ENCODE measurements at regions of chr9 and their contacts with region 1.

Region 1: GRCh38 chr9:135085830-135086546 is 1.5 kb upstream of the OLFM1 start:
- DNase-seq: peak; percentile 30 to 63
- ATAC-seq: peak; percentile 55 to 65
- H3K4me3 ChIP-seq: peak overlapping the region; percentile 19 to 60 (median 40)
- H3K27ac ChIP-seq: peak overlapping the region in 1 of 4 donors; percentile 38
- H3K4me1 ChIP-seq: peaks cover 14 to 28% of the 10 kb centered on the region in 2 donors
- H3K27me3 ChIP-seq: peaks cover 23 to 39% (median 33%) of the 10 kb centered on the region in 3 donors
- CTCF ChIP-seq: peak; percentile 90 to 97 (median 92)
- POLR2A ChIP-seq: no peak

Region 2: GRCh38 chr9:133979273-133979920 is 1106.6 kb before region 1 on chr9:
- in situ Hi-C with region 1: no loop called
- intact Hi-C with region 1: no loop called
- DNase-seq: no peak
- ATAC-seq: peak in 1 of 2 donors; percentile 58
- H3K4me3 ChIP-seq: peak overlapping the region; percentile 25 to 41 (median 32)
- H3K27ac ChIP-seq: peak overlapping the region in 2 of 4 donors; percentile 43 to 47
- H3K4me1 ChIP-seq: peaks cover 0 to 12% of the 10 kb centered on the region in 2 donors
- H3K27me3 ChIP-seq: peaks cover 0 to 13% (median 4%) of the 10 kb centered on the region in 3 donors
- CTCF ChIP-seq: no peak
- POLR2A ChIP-seq: no peak

Region 3: GRCh38 chr9:135137398-135137832 is 51.4 kb after region 1 on chr9:
- in situ Hi-C with region 1: no loop called
- intact Hi-C with region 1: loop called (anchors 5 kb)
- DNase-seq: no peak
- ATAC-seq: peak in 1 of 2 donors; percentile 57
- H3K4me3 ChIP-seq: no peak overlapping the region
- H3K27ac ChIP-seq: peak overlapping the region in 2 of 4 donors; percentile 30 to 33
- H3K4me1 ChIP-seq: peaks cover 14 to 36% of the 10 kb centered on the region in 2 donors
- H3K27me3 ChIP-seq: no peaks in the 10 kb centered on the region
- CTCF ChIP-seq: no peak
- POLR2A ChIP-seq: no peak

Region 4: GRCh38 chr9:135156525-135157510 is 70.8 kb after region 1 on chr9:
- in situ Hi-C with region 1: no loop called
- intact Hi-C with region 1: loop called (anchors 2 kb)
- DNase-seq: no peak
- ATAC-seq: no peak
- H3K4me3 ChIP-seq: no peak overlapping the region
- H3K27ac ChIP-seq: no peak overlapping the region
- H3K4me1 ChIP-seq: no peaks in the 10 kb centered on the region
- H3K27me3 ChIP-seq: peaks cover 16 to 25% (median 17%) of the 10 kb centered on the region in 3 donors
- CTCF ChIP-seq: no peak
- POLR2A ChIP-seq: no peak

Region 5: GRCh38 chr9:135183528-135184180 is 97.7 kb after region 1 on chr9:
- in situ Hi-C with region 1: no loop called
- intact Hi-C with region 1: loop called (anchors 2 kb)
- DNase-seq: no peak
- ATAC-seq: no peak
- H3K4me3 ChIP-seq: no peak overlapping the region
- H3K27ac ChIP-seq: no peak overlapping the region
- H3K4me1 ChIP-seq: no peaks in the 10 kb centered on the region
- H3K27me3 ChIP-seq: peaks cover 24 to 33% (median 29%) of the 10 kb centered on the region in 3 donors
- CTCF ChIP-seq: no peak
- POLR2A ChIP-seq: no peak

Region 6: GRCh38 chr9:135343837-135344522 is 258.0 kb after region 1 on chr9:
- in situ Hi-C with region 1: loop called in 3 of 4 experiments (anchors 5 to 10 kb)
- intact Hi-C with region 1: loop called (anchors 1 kb)
- DNase-seq: peak; percentile 13 to 16
- ATAC-seq: no peak
- H3K4me3 ChIP-seq: no peak overlapping the region
- H3K27ac ChIP-seq: no peak overlapping the region
- H3K4me1 ChIP-seq: no peaks in the 10 kb centered on the region
- H3K27me3 ChIP-seq: peaks cover 10 to 29% (median 19%) of the 10 kb centered on the region in 3 donors
- CTCF ChIP-seq: peak; percentile 66 to 89 (median 80)
- POLR2A ChIP-seq: no peak

Region 7: DNA sequence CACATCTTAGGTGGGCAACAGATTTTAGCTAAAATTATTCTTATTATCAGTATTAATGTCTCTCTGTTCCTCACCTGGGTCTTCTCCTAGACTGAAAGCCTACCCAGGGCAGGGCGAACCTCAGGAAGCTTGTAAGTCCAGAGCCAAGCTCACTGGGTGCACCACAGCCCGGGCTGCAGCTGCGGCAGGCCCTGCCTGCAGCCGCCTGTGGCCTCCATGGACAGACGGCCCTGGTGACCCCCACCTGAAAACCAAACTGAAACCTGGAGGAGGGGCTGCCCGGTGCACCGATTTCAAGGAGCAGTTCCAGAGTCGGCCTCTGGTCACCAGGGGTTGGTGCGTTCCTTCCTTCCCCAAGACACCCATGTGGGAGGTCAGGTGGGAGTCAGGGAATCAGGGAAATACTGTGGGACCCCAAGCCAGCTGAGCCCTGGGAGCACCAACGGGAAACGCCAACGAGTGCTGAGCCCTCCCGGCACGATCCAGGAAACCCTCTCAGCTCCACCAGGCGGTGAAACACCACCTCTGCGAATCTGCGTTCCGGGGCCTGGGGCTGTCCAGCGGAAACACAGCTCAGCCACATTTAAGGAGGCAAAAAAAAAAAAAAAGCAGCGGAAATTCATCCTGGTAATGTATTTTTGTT is 325.0 kb after region 1 on chr9:
- in situ Hi-C with region 1: loop called (anchors 5 to 25 kb)
- intact Hi-C with region 1: loop called (anchors 1 kb)
- DNase-seq: no peak
- ATAC-seq: no peak
- H3K4me3 ChIP-seq: no peak overlapping the region
- H3K27ac ChIP-seq: no peak overlapping the region
- H3K4me1 ChIP-seq: no peaks in the 10 kb centered on the region
- H3K27me3 ChIP-seq: peaks cover 3 to 10% (median 7%) of the 10 kb centered on the region in 3 donors
- CTCF ChIP-seq: no peak
- POLR2A ChIP-seq: no peak